ENCODE measurements at regions of chr6 and their contacts with region 1.

Region 1: DNA sequence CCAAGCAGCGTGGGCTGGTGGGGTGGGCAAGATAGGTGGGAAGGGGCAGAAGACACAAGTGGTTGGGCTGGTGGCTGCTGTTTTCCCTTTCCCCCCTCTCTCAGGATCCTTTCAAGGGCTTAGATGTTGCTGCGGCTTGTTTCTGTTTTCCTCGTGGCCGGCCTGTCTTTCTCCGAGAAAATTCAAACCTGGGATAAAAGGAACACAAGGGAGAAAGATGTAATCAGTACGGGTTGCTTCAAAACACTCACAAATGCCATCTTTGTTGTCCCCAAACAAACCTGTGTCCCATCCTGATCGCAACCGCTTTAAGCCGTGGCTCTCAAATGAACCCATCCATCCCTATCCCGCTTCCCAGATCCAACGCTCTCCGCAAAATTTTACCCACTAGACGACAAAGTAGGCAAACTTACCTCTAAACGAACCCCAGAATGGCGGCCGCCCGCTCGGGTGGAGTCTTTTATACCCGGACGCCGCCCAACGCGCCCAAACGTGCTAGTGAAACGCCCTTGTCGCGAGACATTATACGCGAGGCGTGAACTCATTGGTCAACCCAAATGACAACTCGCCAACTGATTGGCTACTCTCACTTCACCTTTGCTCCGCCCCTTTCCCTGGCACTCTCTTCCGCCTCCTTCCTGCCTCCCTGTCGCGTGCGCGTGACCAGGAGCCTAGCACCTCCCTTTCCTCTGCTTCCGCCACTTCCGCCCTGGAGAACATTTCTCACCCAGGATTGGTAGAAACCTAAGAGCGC is at the start of gene PPP1R10:
- DNase-seq: peak; percentile 99
- H3K4me3 Mint-ChIP-seq: peak within 1 kb of the TSS; percentile 97
- H3K27ac Mint-ChIP-seq: peak within 1 kb of the TSS; percentile 98
- H3K4me1 Mint-ChIP-seq: peaks cover 45% of the 10 kb centered on the region
- H3K27me3 Mint-ChIP-seq: peaks cover 5% of the 10 kb centered on the region
- total RNA-seq, gene PPP1R10: 64.5 to 67.4 TPM

Region 2: GRCh38 chr6:30556066-30556905 is 60.7 kb before region 1 on chr6 and contains the start of gene GNL1:
- CTCF ChIA-PET with region 1: interaction called, 5 read pairs
- POLR2A ChIA-PET with region 1: interaction called, 9 read pairs
- intact Hi-C with region 1: loop called (anchors 1 kb)
- DNase-seq: peak; percentile 100
- H3K4me3 Mint-ChIP-seq: peak within 1 kb of the TSS; percentile 97
- H3K27ac Mint-ChIP-seq: peak within 1 kb of the TSS; percentile 98
- H3K4me1 Mint-ChIP-seq: peaks cover 44% of the 10 kb centered on the region
- H3K27me3 Mint-ChIP-seq: no peaks in the 10 kb centered on the region
- total RNA-seq, gene GNL1: 94.0 to 95.8 TPM

Region 3: GRCh38 chr6:30646458-30647241 is 29.7 kb after region 1 on chr6 and contains the start of gene C6orf136:
- CTCF ChIA-PET with region 1: no interaction called
- POLR2A ChIA-PET with region 1: interaction called, 6 read pairs
- intact Hi-C with region 1: loop called (anchors 1 kb)
- DNase-seq: peak; percentile 96
- H3K4me3 Mint-ChIP-seq: peak within 1 kb of the TSS; percentile 89
- H3K27ac Mint-ChIP-seq: peak within 1 kb of the TSS; percentile 89
- H3K4me1 Mint-ChIP-seq: peaks cover 25% of the 10 kb centered on the region
- H3K27me3 Mint-ChIP-seq: no peaks in the 10 kb centered on the region
- total RNA-seq, gene C6orf136: 32.7 to 37.5 TPM

Region 4: DNA sequence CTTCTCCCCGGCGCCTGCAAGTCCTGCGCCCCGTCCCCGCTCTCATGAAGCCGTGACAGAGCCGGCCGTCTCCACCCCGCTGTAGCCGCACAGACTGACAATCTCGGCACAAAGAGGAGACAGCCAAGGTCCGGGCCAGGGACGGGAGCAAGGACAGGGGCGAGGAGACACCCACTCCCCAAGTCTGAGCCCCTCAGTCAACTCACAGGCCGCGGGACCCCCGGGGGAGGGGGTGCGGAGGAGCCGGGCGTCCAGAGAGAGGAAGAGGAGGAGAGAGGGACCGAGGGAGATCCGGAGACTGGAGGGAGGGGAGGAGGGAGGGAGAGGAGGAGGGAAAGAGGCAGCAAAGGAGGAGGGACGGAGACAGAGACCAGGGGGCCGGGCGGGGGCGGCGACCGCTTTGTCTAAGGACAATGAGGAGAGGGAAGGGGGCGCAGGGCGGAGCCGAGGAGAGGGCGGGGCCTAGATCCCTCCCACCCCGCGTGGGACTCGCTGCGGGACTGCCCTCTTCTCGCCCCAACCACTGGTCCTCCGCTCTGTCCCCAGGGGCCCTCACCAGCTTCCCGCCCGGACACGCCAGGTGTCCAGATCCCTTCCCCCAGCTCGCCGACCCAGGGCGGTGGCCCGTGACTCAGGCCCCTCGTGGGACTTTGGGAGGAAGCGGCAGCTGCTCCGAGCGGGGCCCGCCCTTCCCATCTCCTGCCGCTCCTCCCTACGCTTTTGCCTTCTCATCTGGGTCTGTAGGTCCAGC is 70.1 kb after region 1 on chr6:
- CTCF ChIA-PET with region 1: interaction called, 28 read pairs
- POLR2A ChIA-PET with region 1: interaction called, 21 read pairs
- intact Hi-C with region 1: loop called (anchors 1 kb)
- DNase-seq: peak; percentile 90
- H3K4me3 Mint-ChIP-seq: peak overlapping the region; percentile 100
- H3K27ac Mint-ChIP-seq: peak overlapping the region; percentile 99
- H3K4me1 Mint-ChIP-seq: peaks cover 38% of the 10 kb centered on the region
- H3K27me3 Mint-ChIP-seq: no peaks in the 10 kb centered on the region

Region 5: GRCh38 chr6:30707281-30707872 is 90.4 kb after region 1 on chr6:
- CTCF ChIA-PET with region 1: no interaction called
- POLR2A ChIA-PET with region 1: no interaction called
- intact Hi-C with region 1: no loop called
- DNase-seq: no peak
- H3K4me3 Mint-ChIP-seq: no peak overlapping the region
- H3K27ac Mint-ChIP-seq: no peak overlapping the region
- H3K4me1 Mint-ChIP-seq: peaks cover 8% of the 10 kb centered on the region
- H3K27me3 Mint-ChIP-seq: no peaks in the 10 kb centered on the region

Region 6: GRCh38 chr6:30814136-30815040 is 197.4 kb after region 1 on chr6:
- CTCF ChIA-PET with region 1: no interaction called
- POLR2A ChIA-PET with region 1: interaction called, 3 read pairs
- intact Hi-C with region 1: loop called (anchors 5 kb)
- DNase-seq: peak; percentile 78
- H3K4me3 Mint-ChIP-seq: peak overlapping the region; percentile 22
- H3K27ac Mint-ChIP-seq: peak overlapping the region; percentile 91
- H3K4me1 Mint-ChIP-seq: peaks cover 94% of the 10 kb centered on the region
- H3K27me3 Mint-ChIP-seq: no peaks in the 10 kb centered on the region